ENCODE measurements at regions of chr4 and their contacts with region 1.

Region 1: DNA sequence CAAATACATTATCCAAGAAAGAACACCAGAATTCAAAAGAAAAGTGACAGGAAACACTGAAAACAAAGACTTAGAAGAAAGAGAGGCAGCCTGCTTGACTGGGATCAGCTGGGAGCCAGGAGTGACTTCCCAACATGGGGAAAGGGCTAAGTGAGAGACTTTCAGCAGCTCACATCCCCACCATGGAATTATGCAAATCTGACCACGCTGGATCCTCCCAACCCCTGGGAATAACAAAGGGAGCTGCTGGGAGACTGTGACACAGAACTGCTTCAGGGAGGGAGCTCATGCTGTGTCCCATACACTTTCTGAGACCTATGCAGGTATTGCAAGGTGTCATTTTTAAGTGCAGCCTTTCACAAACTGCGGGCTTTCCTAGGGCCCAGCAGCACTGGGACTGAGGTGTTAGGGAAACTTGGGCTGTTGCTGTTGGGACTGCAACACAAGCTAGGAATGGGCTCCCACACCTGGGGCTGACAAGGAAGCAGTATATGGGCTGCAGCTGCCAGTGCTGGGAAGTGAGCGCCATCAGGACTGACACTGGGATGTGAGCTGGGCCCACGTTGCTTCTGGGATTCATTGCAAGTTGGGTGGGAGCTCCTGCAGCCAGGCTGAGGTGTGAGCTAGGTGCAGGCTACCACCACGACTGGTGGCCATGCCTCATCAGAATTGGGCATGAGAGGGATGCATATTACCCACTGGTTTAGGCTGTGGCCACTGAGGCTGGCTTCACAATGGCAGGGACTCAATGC is 139.1 kb downstream of the KDR start:
- DNase-seq: no peak
- ATAC-seq: no peak
- H3K4me3 ChIP-seq: no peak overlapping the region
- H3K27ac ChIP-seq: no peak overlapping the region
- H3K4me1 ChIP-seq: no peaks in the 10 kb centered on the region
- H3K27me3 ChIP-seq: no peaks in the 10 kb centered on the region
- CTCF ChIP-seq: no peak
- EP300 ChIP-seq: no peak
- POLR2A ChIP-seq: no peak
- RAD21 ChIP-seq: no peak

Region 2: DNA sequence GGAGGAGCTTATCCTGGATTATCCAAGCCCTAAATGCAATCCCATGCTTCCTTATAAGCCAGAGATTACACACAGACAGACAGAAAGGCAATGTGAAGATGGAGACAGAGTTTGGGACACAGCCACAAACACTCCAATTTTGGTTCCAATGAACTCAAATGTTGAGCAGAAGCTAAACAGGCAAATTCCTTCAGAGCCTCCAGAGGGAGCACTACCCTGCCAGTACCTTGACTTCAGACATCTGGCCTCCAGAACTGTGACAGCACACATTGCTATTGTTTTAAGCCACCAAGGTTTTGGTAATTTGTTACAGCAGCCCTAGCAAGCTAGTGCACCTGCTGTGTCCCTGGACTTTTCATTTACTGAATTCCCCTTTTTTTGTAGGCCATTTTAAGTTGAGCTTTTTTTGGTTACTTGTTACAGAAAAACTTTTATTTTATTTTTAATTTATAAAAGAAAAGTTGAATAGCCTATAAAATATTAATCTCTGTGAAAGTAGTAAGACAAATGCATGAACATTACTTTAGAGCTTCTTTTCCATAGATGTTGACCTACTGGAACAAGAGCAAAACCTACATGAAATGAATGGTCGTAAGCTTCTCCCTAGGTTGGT is 326.3 kb after region 1 on chr4:
- CTCF ChIA-PET with region 1: no interaction called
- POLR2A ChIA-PET with region 1: no interaction called
- in situ Hi-C with region 1: loop called (anchors 10 kb)
- intact Hi-C with region 1: no loop called
- DNase-seq: peak in 2 of 4 experiments; percentile 16 to 58
- ATAC-seq: peak; percentile 94
- H3K4me3 ChIP-seq: no peak overlapping the region
- H3K27ac ChIP-seq: no peak overlapping the region
- H3K4me1 ChIP-seq: peaks cover 0 to 12% of the 10 kb centered on the region in 2 experiments; a peak in 2 of 5 replicates
- H3K27me3 ChIP-seq: peaks cover 4 to 9% of the 10 kb centered on the region in 2 experiments; a peak in 3 of 5 replicates
- CTCF ChIP-seq: peak; percentile 67 to 73 (median 68)
- EP300 ChIP-seq: no peak
- POLR2A ChIP-seq: no peak
- RAD21 ChIP-seq: peak; percentile 19 to 50; a peak in 3 of 4 replicates

Measured in K562 (cell line).